ENCODE measurements at regions of chr22 and their contacts with region 1.

Region 1: GRCh38 chr22:20550821-20551744 is 43.7 kb downstream of the MED15 start:
- DNase-seq: no peak
- H3K4me3 ChIP-seq: no peak overlapping the region
- H3K27ac ChIP-seq: no peak overlapping the region
- H3K4me1 ChIP-seq: no peaks in the 10 kb centered on the region
- CTCF ChIP-seq: no peak

Region 2: DNA sequence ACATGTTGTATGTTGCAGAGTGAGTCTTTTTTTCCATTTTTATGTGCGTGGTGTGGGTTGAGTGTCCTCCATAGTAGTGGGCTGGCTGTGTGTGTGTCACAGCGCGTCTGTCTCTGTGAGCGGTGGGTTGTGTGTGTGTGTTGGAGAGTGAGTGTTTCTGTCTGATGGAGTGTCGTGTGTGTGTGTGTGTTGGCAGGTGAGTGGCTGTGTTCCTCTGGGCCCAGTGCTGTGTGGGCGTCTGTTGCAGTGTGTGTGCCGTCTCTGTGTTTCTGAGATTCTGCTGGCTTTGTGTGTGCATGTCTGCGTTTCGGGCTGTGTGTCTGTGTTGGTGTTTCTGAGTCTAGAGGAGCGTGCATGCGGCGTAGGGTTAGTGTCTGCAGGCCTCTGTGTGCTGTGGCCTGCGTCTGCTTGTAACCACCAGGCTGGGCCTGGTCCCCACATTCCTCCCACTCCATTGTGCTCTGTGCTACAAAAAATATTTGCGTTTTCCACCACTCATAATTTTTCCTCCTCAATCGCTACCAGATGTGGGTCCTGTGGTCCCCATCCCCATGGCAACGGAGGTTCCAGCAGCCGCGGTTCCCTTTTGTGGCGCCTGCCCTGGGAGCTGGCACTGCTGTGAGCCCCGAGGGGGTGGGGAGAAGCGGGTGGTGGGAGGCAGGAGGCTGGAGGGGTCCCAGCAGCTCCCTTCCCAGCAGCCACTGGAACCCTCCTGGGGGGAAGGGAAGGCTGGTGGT is 128.6 kb before region 1 on chr22:
- CTCF ChIA-PET with region 1: no interaction called
- POLR2A ChIA-PET with region 1: no interaction called
- intact Hi-C with region 1: no loop called
- DNase-seq: no peak
- H3K4me3 ChIP-seq: no peak overlapping the region
- H3K27ac ChIP-seq: no peak overlapping the region
- H3K4me1 ChIP-seq: peaks cover 3% of the 10 kb centered on the region
- CTCF ChIP-seq: no peak

Region 3: DNA sequence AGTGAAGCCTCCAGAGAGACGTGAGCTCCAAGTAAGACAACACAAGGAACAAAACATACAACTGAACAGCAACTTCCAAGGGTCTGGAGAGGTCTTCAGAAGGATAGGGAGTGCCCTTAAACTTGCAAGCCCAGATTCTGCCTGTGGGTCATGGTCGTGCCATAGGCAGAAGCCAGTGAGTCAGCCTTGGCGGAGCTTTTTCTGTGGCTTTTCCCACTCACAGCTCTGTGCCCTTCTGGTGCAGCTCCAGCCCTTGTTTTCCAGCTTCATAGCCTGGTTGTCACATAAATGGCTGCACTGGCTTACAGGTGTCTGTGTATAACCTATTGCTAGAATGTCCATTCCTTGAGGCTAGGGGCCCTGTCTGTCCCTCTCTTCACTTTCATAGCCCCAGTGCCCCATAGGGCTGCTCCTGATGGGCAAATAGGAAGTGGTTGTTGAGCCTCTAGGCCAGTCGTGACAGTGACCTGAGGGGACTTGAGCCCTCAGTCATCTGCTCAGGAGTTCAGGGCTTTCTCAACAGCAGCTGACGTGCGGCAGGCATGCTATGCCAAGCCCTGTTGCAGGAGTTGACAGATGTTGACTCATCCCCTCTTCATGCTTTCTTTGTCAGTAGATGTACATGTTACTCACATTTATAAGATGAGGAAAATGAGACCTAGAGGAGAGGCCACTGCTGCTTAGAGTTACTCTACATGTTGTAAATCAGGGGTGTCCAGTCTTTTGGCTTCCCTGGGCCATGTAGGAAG is 36.3 kb before region 1 on chr22:
- CTCF ChIA-PET with region 1: no interaction called
- POLR2A ChIA-PET with region 1: interaction called, 3 read pairs
- intact Hi-C with region 1: loop called (anchors 5 kb)
- DNase-seq: no peak
- H3K4me3 ChIP-seq: no peak overlapping the region
- H3K27ac ChIP-seq: no peak overlapping the region
- H3K4me1 ChIP-seq: peaks cover 18% of the 10 kb centered on the region
- CTCF ChIP-seq: no peak

Measured in OCI-LY7 (cell line).